Tibial artery (tissue), 4 donors: ENCODE measurements at regions of chr2 and their contacts with region 1.

Region 1: GRCh38 chr2:3575534-3576262 is 638 bp downstream of the RPS7 start:
- DNase-seq: no peak
- H3K4me3 ChIP-seq: peak overlapping the region; percentile 79 to 90
- H3K27ac ChIP-seq: peak overlapping the region; percentile 90 to 92
- H3K4me1 ChIP-seq: peaks cover 0 to 36% (median 22%) of the 10 kb centered on the region in 4 donors
- H3K27me3 ChIP-seq: no peaks in the 10 kb centered on the region
- CTCF ChIP-seq: no peak

Region 2: GRCh38 chr2:3558205-3559014 is 17.3 kb before region 1 on chr2 and contains the start of gene RNASEH1:
- intact Hi-C with region 1: loop called (anchors 1 kb)
- DNase-seq: peak; percentile 96 to 98
- H3K4me3 ChIP-seq: peak within 1 kb of the TSS; percentile 74 to 98
- H3K27ac ChIP-seq: peak within 1 kb of the TSS; percentile 87 to 96
- H3K4me1 ChIP-seq: peaks cover 0 to 17% (median 10%) of the 10 kb centered on the region in 4 donors
- H3K27me3 ChIP-seq: no peaks in the 10 kb centered on the region
- CTCF ChIP-seq: no peak

Region 3: DNA sequence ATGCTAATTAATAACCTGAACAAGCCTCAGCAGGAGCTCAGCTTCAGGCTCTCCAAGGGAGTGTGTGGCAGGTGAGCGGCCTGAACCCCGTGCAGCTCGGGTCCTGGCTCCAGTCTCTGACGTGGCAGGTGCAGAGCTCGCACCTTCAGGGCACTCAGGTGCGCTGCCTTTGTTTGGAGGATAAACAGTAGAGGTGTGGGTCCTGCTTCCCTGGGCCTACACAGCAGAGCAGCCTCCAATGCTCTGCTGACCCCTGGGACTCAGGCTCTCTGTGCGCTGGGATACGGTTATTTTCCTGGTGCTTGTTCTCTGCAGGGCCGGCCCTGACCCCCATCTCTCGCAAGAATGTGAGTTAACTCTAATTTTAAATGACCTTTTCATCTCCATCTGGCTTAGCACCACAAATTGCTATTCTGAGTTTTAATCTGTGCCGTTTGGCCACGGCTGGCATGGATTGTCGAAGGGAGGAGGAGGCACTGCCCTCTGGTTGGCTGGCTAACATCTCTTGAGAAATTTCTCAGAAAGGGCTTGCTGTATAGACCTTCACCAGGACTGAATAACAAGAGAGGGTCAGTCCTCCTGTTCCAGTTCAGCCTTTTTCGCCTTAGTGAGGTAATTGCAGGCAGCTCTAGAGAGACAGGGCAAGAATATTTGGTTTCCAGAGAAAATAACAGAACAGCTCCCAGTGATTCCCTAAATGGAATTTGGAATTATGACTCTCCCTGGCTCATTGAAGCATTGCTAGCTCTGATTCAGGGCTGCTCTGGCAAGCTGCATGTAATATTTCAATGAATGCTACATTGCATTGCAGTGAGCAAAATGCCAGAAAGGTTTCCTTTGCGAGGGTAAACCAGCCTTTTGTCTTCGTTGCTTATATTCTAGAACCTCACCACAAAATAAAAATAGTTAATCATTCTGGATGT is 289.5 kb after region 1 on chr2:
- intact Hi-C with region 1: no loop called
- DNase-seq: no peak
- H3K4me3 ChIP-seq: no peak overlapping the region
- H3K27ac ChIP-seq: peak overlapping the region in 1 of 2 donors; percentile 42
- H3K4me1 ChIP-seq: peaks cover 0 to 24% (median 15%) of the 10 kb centered on the region in 4 donors
- H3K27me3 ChIP-seq: no peaks in the 10 kb centered on the region
- CTCF ChIP-seq: no peak